ENCODE measurements at regions of chr1 and their contacts with region 1.

Region 1: GRCh38 chr1:220810179-220810653 is 23.5 kb downstream of the MTARC1 start:
- DNase-seq: peak; percentile 48 to 84 (median 60)
- ATAC-seq: peak; percentile 97
- H3K4me3 ChIP-seq: peak overlapping the region; percentile 23
- H3K4me3 Mint-ChIP-seq: peak overlapping the region; percentile 71
- H3K27ac ChIP-seq: no peak overlapping the region
- H3K27ac Mint-ChIP-seq: no peak overlapping the region
- H3K4me1 ChIP-seq: peaks cover 6% of the 10 kb centered on the region
- H3K4me1 Mint-ChIP-seq: peaks cover 10% of the 10 kb centered on the region
- H3K27me3 ChIP-seq: peaks cover 0 to 6% of the 10 kb centered on the region in 2 experiments
- H3K27me3 Mint-ChIP-seq: peaks cover 58% of the 10 kb centered on the region
- CTCF ChIP-seq: peak; percentile 96

Region 2: DNA sequence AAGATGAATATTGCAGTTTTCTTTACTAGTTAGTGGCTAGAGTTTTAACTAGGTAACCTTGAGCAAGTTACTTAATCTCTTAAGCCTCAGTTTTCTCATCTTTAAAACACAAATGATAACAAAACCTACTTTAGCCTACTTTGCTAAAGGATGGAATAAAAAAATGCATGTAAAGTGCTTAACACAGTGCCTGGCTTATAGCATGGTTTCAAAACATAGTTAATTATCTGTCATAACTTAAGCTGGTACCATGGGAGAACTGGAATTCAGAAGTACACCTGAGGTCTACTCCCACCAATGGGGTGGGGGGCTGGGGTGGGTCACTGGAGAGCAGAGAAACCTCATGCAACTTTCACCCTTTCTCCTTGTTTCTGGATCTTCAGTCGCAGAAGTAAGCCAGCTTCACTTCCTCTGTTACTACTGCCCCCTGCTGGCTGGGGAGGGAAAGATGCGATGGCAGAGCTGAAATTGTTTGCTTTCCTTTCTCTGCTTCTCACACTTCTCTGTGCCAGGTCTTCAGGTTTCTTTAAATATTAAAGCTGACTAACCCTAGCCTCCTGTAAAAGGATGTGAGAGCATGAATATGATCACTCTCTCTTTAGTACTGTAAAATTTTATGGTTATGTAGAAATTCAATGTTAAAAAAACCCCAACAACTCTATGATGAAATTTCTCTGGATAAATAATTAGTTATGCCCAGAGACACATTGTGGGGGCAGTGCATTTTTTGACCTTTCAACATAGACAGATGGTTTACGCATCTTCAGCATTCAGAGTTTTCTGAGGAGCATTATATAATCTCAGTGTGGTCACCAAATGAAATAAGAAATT is 393.2 kb after region 1 on chr1:
- CTCF ChIA-PET with region 1: no interaction called
- POLR2A ChIA-PET with region 1: no interaction called
- intact Hi-C with region 1: loop called (anchors 5 to 10 kb)
- DNase-seq: peak; percentile 18 to 69 (median 43)
- ATAC-seq: no peak
- H3K4me3 ChIP-seq: no peak overlapping the region
- H3K4me3 Mint-ChIP-seq: no peak overlapping the region
- H3K27ac ChIP-seq: no peak overlapping the region
- H3K27ac Mint-ChIP-seq: no peak overlapping the region
- H3K4me1 ChIP-seq: no peaks in the 10 kb centered on the region
- H3K4me1 Mint-ChIP-seq: no peaks in the 10 kb centered on the region
- H3K27me3 ChIP-seq: no peaks in the 10 kb centered on the region
- H3K27me3 Mint-ChIP-seq: peaks cover 8% of the 10 kb centered on the region
- CTCF ChIP-seq: peak; percentile 71

Region 3: DNA sequence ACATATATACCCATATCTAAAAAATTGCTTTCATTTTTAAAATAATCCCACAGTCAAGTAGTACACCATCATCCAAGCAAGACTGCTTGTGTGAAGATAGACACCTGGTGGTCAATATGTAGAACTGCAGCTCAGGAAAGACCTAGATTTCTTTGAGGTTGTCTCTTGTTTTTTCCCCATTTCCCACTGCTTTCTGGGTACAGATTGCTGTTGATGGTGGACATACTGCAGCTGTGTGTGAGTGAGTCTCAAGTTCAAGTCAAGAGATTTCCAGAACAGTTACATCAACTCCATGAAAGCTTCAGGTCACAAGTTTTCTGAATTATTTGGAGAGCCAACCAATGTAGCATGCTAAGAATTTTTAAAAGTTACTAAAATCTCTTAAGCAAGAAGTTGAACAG is 625.3 kb after region 1 on chr1:
- CTCF ChIA-PET with region 1: no interaction called
- POLR2A ChIA-PET with region 1: no interaction called
- intact Hi-C with region 1: loop called in 1 of 2 experiments (anchors 5 kb)
- DNase-seq: peak in 3 of 14 experiments; percentile 54 to 58 (median 57)
- ATAC-seq: peak; percentile 56
- H3K4me3 ChIP-seq: no peak overlapping the region
- H3K4me3 Mint-ChIP-seq: no peak overlapping the region
- H3K27ac ChIP-seq: no peak overlapping the region
- H3K27ac Mint-ChIP-seq: no peak overlapping the region
- H3K4me1 ChIP-seq: peaks cover 8% of the 10 kb centered on the region
- H3K4me1 Mint-ChIP-seq: peaks cover 19% of the 10 kb centered on the region
- H3K27me3 ChIP-seq: no peaks in the 10 kb centered on the region
- H3K27me3 Mint-ChIP-seq: peaks cover 9% of the 10 kb centered on the region
- CTCF ChIP-seq: peak; percentile 93

Region 4: DNA sequence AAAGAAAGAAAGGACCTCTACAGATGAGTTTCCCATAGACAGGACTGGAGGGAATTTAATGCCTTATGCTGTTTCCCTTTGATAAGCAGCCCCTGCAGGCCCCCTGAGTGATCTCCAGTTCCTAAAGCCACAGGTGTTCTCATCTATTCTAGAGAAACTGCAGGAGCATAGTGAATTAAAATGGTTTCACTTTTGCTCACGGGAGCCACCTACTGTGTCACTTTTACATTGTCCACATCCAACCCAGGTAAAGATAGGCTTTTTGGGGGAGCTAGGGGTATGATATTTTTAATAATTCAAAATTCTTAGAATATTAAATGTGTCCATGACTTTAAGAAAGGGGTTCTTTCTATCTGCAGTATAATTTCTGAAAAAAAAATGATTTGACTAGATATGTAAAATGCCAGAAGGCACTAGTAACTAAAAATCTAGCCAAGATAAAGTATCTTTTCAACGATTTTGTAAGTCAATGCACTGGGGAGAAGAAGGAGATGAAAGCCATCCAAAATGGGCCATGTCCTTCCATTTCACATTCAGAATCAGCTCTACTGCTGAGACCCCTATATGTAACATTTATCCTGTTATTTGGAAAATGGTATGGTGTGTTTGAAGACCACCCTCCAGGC is 1199.0 kb after region 1 on chr1:
- CTCF ChIA-PET with region 1: no interaction called
- POLR2A ChIA-PET with region 1: no interaction called
- intact Hi-C with region 1: loop called in 1 of 2 experiments (anchors 10 kb)
- DNase-seq: peak in 10 of 14 experiments; percentile 2 to 58 (median 14)
- ATAC-seq: no peak
- H3K4me3 ChIP-seq: no peak overlapping the region
- H3K4me3 Mint-ChIP-seq: no peak overlapping the region
- H3K27ac ChIP-seq: no peak overlapping the region
- H3K27ac Mint-ChIP-seq: no peak overlapping the region
- H3K4me1 ChIP-seq: no peaks in the 10 kb centered on the region
- H3K4me1 Mint-ChIP-seq: no peaks in the 10 kb centered on the region
- H3K27me3 ChIP-seq: no peaks in the 10 kb centered on the region
- H3K27me3 Mint-ChIP-seq: peaks cover 4% of the 10 kb centered on the region
- CTCF ChIP-seq: peak; percentile 40

Measured in CD4-positive, alpha-beta T cell (primary cell).